Activated T-helper 2 cell treated with anti-CD3 and anti-CD28 coated beads, Interferon-gamma antibody, Interleukin-2, Interleukin-4, amounts not matched to agents 10 μg/mL and 5 μg/mL and 100 μg/mL, durations not matched to agents 14 hours and 24 hours and 36 hours (primary cell): ENCODE measurements at regions of chr7 and their contacts with region 1.

Region 1: GRCh38 chr7:48035301-48035966 is at the start of gene C7orf57:
- DNase-seq: peak; percentile 83
- H3K4me3 Mint-ChIP-seq: peak within 1 kb of the TSS; percentile 76
- H3K27ac Mint-ChIP-seq: no peak within 1 kb of the TSS
- H3K4me1 Mint-ChIP-seq: peaks cover 9% of the 10 kb centered on the region
- H3K27me3 Mint-ChIP-seq: peaks cover 50% of the 10 kb centered on the region
- total RNA-seq, gene C7orf57: 0.11 and 0.18 TPM in 2 replicates

Region 2: GRCh38 chr7:47979145-47979831 is 56.1 kb before region 1 on chr7 and contains the start of gene HUS1:
- intact Hi-C with region 1: loop called (anchors 5 kb)
- DNase-seq: peak; percentile 90
- H3K4me3 Mint-ChIP-seq: peak within 1 kb of the TSS; percentile 90
- H3K27ac Mint-ChIP-seq: peak within 1 kb of the TSS; percentile 95
- H3K4me1 Mint-ChIP-seq: peaks cover 14% of the 10 kb centered on the region
- H3K27me3 Mint-ChIP-seq: peaks cover 1% of the 10 kb centered on the region
- total RNA-seq, gene HUS1: 33.8 and 36.6 TPM in 2 replicates

Region 3: GRCh38 chr7:48052748-48053147 is 17.3 kb after region 1 on chr7:
- intact Hi-C with region 1: loop called (anchors 2 kb)
- DNase-seq: no peak
- H3K4me3 Mint-ChIP-seq: no peak overlapping the region
- H3K27ac Mint-ChIP-seq: no peak overlapping the region
- H3K4me1 Mint-ChIP-seq: peaks cover 11% of the 10 kb centered on the region
- H3K27me3 Mint-ChIP-seq: peaks cover 2% of the 10 kb centered on the region

Region 4: DNA sequence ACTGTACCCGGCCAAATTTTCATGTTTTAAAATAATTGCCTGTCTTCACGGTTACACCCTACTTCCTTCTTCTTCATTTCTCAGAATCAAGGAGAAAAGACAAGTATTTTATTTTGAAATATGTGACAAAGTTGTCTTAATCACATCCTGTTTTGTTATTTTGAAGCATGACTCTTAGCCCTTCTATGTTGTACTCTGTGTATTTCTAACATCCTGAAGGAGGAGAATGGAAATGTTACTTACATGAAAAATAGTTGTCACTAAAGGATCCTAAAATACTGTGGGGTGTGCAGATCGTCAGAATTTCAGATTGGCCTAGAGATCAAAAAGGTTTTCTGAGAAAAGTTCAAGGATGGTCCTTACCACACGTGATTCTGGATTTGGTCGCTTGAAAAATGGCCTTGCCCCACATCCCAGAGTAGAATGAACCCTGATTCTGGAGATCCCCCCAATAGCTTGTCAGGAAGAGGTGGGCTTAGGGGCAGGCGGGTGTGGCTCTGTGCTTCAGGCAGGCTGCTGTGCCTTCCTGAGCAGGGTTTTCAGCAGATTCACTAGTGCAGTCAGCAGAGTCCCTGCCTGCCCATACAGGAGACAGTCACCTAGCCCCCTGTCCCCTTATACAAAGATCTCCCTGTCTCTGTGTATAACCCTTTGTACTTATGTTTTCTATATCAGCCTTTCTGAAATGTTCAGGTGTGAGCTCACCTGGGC is 62.2 kb after region 1 on chr7:
- intact Hi-C with region 1: loop called (anchors 2 kb)
- DNase-seq: peak; percentile 38
- H3K4me3 Mint-ChIP-seq: peak overlapping the region; percentile 42
- H3K27ac Mint-ChIP-seq: peak overlapping the region; percentile 91
- H3K4me1 Mint-ChIP-seq: peaks cover 59% of the 10 kb centered on the region
- H3K27me3 Mint-ChIP-seq: no peaks in the 10 kb centered on the region

Region 5: DNA sequence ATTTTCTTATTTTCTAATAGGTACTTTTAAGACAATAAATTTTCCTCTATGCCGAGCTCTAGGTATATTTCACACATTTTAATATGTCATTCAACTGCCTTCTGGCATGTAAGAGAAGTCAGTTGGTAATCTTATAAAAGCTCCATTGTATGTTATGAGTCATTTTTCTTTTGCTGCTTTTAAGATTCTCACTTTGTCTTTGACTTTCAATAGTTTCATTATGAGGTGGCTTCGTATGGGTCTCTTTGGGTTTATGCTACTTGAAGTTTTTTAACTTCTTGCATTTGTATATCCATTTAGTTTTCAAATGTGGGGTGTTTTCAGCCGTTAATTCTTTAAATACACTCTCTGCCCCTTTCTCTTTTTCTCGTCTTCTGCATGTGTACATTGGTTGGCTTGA is 216.3 kb after region 1 on chr7:
- intact Hi-C with region 1: loop called (anchors 5 kb)
- DNase-seq: no peak
- H3K4me3 Mint-ChIP-seq: no peak overlapping the region
- H3K27ac Mint-ChIP-seq: peak overlapping the region; percentile 26
- H3K4me1 Mint-ChIP-seq: peaks cover 30% of the 10 kb centered on the region
- H3K27me3 Mint-ChIP-seq: peaks cover 3% of the 10 kb centered on the region